Activated naive CD8-positive, alpha-beta T cell treated with anti-CD3 and anti-CD28 coated beads, Interleukin-2, amount 10 ng/mL, durations not matched to agents 7 days and 5 days (primary cell): ENCODE measurements at regions of chr12 and their contacts with region 1.

Region 1: DNA sequence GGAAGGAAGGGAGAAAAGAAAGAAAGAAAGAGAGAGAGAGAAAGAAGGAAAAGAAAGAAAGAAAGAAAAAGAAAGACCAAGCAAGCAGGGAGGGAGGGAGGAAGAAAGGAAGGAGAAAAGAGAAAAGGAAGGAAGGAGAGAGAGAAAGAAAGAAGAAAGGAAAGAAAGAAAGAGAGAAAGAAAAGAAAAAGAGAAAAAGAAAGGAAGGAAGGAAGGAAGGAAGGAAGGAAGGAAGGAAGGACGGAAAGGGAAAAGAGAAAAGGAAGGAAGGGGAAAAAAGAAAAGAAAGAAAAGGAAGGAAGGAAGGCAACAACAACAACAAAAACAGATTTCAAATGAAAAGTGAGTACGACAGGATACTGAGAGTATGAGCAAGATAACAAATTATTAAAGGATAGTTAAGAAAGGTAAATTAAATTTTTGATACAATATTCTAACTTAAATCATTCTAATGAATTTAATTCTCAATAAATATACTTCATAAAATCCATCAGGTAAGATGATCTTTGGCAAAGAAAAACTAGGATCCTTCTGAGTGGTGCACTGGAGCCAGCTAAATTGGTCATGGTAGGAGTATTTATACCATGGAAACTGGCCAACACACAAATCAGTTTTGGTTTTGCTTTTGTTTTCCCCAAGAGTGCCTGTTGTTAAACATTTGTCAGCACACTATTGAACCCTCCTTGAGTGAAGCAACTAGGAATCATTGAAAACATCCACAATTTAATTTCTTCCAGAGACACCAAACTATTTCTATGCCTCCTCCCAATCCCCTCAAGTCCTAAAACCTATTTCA is 56.1 kb upstream of the DYRK2 start:
- DNase-seq: no peak
- ATAC-seq: peak; percentile 83
- H3K4me3 Mint-ChIP-seq: peak overlapping the region; percentile 81
- H3K27ac Mint-ChIP-seq: peak overlapping the region; percentile 89
- H3K4me1 Mint-ChIP-seq: peaks cover 36% of the 10 kb centered on the region
- H3K27me3 Mint-ChIP-seq: no peaks in the 10 kb centered on the region

Region 2: DNA sequence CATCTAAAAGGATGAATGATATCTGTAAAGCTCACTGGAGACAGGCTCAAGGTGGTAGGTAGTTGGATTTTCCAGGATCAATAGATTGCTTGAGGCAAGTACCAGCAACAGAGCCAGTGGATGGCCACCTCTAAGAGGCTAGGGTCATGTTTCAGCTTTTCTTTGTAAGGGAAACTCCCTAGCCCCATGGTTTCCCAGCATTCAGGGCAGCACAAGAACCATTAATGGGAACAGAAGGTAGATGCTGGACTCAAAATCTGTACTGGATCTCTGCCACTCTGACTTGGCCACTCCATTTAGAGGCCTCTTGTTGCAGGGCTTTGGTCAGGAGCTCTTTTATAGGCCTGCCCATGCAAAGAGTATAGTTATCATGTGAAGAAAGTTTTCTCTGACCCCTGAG is 19.9 kb before region 1 on chr12:
- POLR2A ChIA-PET with region 1: no interaction called
- DNase-seq: no peak
- ATAC-seq: no peak
- H3K4me3 Mint-ChIP-seq: no peak overlapping the region
- H3K27ac Mint-ChIP-seq: no peak overlapping the region
- H3K4me1 Mint-ChIP-seq: peaks cover 3% of the 10 kb centered on the region
- H3K27me3 Mint-ChIP-seq: no peaks in the 10 kb centered on the region

Region 3: DNA sequence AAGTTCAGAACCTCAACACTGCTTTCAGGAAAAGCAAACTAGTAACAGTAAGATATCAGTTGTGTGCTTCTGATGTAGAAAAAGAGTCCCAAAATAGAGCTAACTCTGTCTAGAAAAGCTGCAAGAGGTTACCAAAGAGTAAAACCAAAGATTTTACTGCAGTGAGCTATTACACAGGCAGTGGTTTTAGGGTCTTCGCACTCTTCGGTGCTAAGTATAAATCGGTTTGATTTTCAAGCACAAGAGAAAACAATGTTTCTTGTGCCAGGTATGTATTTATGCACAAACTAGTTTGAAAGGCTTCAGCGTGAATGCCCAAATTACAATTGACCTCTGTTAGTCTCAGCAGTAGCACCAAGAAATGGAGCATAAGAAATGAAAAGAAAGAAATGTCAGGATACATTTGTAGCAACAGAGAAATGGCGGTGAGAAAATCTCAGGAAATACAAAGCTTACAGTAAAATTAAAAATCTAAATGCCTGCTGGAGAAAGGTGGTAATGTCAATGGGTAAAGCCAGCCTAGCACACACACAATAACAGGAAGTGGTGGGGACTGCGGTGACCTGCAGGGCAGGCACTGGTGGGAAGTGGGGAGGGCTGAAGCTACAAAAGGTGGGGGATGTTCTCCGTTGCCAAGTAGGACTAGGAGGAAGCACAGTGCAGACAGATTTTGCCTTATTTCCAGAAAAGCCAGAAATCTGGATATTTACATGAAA is 38.1 kb after region 1 on chr12:
- POLR2A ChIA-PET with region 1: interaction called, 14 read pairs
- DNase-seq: peak; percentile 88
- ATAC-seq: peak; percentile 99
- H3K4me3 Mint-ChIP-seq: peak overlapping the region; percentile 72
- H3K27ac Mint-ChIP-seq: peak overlapping the region; percentile 94
- H3K4me1 Mint-ChIP-seq: peaks cover 50% of the 10 kb centered on the region
- H3K27me3 Mint-ChIP-seq: peaks cover 3% of the 10 kb centered on the region